ENCODE measurements at regions of chr12 and their contacts with region 1.

Region 1: DNA sequence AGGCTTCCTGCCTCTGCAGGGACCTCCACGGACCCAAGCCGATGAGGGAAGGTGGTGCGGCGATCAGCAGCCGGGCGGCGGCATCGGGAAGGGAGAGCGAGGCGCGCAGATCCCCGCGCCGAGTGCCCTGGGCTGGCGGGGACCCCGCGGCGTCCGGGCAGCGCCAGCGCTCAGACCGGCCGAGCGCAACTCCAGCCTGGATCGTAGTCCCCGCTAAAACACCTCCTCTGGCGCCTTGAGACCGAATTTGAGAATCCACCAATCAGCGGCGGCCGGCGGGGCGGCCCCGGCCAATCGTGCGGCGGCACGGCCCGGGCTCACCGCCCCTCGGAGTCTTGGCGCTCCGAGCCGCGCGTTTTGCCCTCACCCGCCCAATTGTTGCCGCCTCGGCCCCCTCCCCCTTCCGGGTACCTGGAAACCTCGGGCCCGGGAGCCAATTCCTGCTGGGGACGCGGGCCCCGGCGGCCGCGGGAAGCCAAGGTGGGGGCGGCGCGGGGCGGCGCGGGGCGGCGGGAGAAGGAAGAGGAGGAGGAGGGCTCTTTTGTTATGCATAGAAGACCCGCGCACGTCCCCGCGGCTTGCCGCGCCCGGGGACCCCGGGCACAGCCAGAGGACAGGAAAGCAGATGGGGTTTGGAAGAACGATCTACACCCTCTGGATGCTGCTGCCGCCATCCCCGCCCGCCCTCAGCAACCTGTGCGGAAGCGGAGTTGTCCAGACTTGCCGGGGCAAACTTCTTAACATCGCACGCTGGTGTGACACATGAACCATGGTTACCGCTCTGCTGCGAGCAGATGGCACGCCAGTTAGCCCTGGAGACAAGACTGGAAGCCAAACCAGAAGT is at the start of gene E2F7:
- DNase-seq: peak; percentile 69 to 96
- H3K4me3 ChIP-seq: peak within 1 kb of the TSS; percentile 69
- CTCF ChIP-seq: no peak
- POLR2A ChIP-seq: no peak
- total RNA-seq, gene E2F7: 0.71 to 2.0 (median 1.5) TPM

Region 2: DNA sequence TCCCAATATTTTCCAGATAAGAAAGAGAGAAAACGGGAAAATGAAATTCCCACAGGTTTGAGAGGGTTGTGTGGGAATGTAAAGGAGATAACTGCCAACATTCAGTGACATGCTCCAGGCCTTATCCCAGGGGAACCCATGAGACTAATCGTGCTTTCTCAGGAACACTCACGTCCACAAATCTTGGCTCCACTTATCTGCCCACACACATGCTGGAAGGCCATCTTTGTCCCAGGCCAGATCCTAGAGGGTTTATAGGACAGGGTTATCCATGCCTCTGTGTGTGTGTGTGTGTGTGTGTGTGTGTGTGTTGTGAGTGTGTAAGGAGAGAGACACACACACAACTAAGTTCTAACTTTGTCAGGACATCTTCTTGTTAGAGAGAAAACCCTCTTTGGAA is 182.0 kb after region 1 on chr12:
- intact Hi-C with region 1: no loop called
- DNase-seq: no peak
- H3K4me3 ChIP-seq: no peak overlapping the region
- CTCF ChIP-seq: no peak
- POLR2A ChIP-seq: no peak

Region 3: GRCh38 chr12:77324763-77325468 is 259.3 kb after region 1 on chr12:
- intact Hi-C with region 1: loop called (anchors 10 kb)
- DNase-seq: peak; percentile 28 to 93
- H3K4me3 ChIP-seq: peak overlapping the region; percentile 44
- CTCF ChIP-seq: no peak
- POLR2A ChIP-seq: no peak